Activated naive CD8-positive, alpha-beta T cell treated with anti-CD3 and anti-CD28 coated beads, Interleukin-2, amount 10 ng/mL, durations not matched to agents 7 days and 5 days (primary cell): ENCODE measurements at regions of chr6 and their contacts with region 1.

Region 1: GRCh38 chr6:11232193-11232769 is at the start of gene NEDD9:
- DNase-seq: peak; percentile 88
- ATAC-seq: peak; percentile 97
- H3K4me3 Mint-ChIP-seq: peak within 1 kb of the TSS; percentile 87
- H3K27ac Mint-ChIP-seq: peak within 1 kb of the TSS; percentile 95
- H3K4me1 Mint-ChIP-seq: peaks cover 54% of the 10 kb centered on the region
- H3K27me3 Mint-ChIP-seq: no peaks in the 10 kb centered on the region
- total RNA-seq, gene NEDD9: 72.2 to 80.8 TPM

Region 2: DNA sequence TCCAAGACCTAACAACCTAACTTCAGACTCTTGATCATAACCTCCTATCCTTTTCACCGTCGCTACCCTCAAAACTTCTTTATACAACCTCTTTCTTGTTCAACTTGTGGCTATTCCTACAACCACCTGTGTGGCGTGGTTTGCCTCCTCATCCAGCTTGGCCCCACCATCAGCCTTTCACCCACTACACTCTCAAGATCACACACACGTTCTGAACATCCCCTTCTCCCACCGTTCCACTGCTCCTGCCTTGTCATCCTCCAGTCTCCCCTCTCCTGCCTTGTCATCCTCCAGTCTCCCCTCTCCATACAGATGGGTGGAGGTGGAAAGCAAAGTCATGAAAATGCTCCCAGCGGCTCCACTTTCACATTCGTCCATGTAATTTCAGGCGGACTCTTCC is 408.0 kb before region 1 on chr6:
- POLR2A ChIA-PET with region 1: no interaction called
- DNase-seq: no peak
- ATAC-seq: no peak
- H3K4me3 Mint-ChIP-seq: no peak overlapping the region
- H3K27ac Mint-ChIP-seq: no peak overlapping the region
- H3K4me1 Mint-ChIP-seq: no peaks in the 10 kb centered on the region
- H3K27me3 Mint-ChIP-seq: no peaks in the 10 kb centered on the region

Region 3: GRCh38 chr6:11172501-11173332 is 59.6 kb before region 1 on chr6:
- POLR2A ChIA-PET with region 1: interaction called, 10 read pairs
- DNase-seq: peak; percentile 81
- ATAC-seq: peak; percentile 79
- H3K4me3 Mint-ChIP-seq: peak overlapping the region; percentile 18
- H3K27ac Mint-ChIP-seq: peak overlapping the region; percentile 39
- H3K4me1 Mint-ChIP-seq: peaks cover 31% of the 10 kb centered on the region
- H3K27me3 Mint-ChIP-seq: no peaks in the 10 kb centered on the region

Region 4: GRCh38 chr6:11207199-11207968 is 24.9 kb before region 1 on chr6:
- POLR2A ChIA-PET with region 1: interaction called, 68 read pairs
- DNase-seq: no peak
- ATAC-seq: no peak
- H3K4me3 Mint-ChIP-seq: no peak overlapping the region
- H3K27ac Mint-ChIP-seq: peak overlapping the region; percentile 78
- H3K4me1 Mint-ChIP-seq: peaks cover 78% of the 10 kb centered on the region
- H3K27me3 Mint-ChIP-seq: no peaks in the 10 kb centered on the region

Region 5: DNA sequence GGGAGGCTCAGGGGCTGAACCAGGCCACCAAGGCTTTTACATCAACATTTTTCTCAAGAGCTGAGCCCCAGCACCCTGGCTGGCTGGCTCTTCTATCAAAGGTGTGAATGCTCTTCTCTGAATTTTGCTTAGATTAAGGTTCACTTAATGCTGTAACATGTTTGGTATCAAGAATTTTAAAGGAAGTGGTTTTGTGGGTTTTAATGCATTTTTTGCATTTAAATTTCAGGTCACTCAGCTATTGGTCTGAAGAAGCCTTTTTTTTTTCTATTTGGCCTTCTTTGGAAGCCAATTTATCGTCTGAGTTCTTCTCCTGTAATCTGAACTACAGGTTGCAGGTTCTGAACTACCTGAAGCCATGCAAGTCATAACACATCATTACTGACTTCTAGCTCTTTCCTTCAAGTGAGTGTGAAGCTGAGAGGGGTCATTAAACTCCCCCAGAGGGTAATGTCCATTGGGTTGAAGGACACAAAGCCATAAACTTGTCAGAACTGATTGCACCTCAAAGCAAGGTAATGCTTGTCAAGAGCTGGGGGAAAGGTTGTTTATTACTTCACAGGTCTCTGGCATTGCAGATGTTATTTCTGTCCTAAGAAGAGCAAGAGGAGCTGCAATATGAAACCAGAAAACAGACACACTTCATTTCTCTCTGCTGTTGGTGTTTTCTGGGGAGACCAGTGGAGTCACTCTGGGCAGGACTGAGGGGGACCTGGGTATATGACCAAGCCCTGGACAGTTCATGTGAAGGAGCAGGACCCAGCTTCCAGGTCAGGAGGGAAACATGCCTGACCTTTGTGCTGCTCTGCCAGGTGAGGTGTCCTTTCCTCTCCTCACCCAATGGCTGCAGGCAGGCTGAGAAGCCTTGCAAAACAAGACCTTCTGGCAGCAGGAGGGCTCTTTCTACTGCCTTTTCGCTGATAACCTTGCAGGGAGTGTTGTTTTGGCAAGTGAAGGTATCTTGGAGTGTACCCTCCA is 26.3 kb after region 1 on chr6:
- POLR2A ChIA-PET with region 1: interaction called, 37 read pairs
- DNase-seq: peak; percentile 48
- ATAC-seq: peak; percentile 97
- H3K4me3 Mint-ChIP-seq: peak overlapping the region; percentile 63
- H3K27ac Mint-ChIP-seq: peak overlapping the region; percentile 89
- H3K4me1 Mint-ChIP-seq: peaks cover 54% of the 10 kb centered on the region
- H3K27me3 Mint-ChIP-seq: no peaks in the 10 kb centered on the region